Right ventricle myocardium superior (tissue), 1 donor: ENCODE measurements at regions of chr6 and their contacts with region 1.

Region 1: GRCh38 chr6:24581084-24581669 is 64.8 kb downstream of the KIAA0319 start:
- DNase-seq: peak; percentile 81
- ATAC-seq: peak; percentile 74

Region 2: DNA sequence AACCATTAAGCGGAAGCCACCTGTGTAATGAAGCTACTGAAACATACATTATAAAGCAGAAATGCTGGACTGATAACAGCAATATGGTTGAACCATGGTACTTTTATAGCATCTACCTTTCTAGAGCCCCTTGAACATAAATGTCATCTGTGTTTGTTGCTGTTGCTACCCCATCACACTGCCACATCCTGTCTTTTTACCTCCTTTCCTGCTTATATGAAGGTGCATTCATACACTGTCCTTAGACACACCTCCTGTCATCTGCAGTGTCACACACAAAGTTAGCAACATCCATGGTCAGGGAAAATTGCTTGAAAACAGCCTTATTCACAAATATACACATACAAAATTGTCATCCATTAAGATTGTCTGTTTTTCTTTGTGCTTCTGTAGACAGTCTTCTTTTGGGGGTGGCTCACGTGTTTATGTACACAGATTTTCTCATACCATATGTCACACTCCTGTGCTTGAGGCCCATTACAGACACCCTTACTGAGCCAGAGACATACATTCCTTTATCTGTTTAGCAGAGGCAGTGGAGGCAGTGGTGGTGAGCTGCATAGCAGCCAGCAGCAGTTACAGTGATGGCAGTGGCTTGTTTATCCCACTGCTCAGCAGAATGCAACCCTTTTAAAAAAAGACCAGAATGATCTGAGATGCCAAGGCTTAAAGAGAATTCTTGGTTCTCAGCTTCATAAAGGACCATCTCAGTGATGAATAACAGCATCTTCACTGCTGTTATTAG is 111.8 kb after region 1 on chr6:
- intact Hi-C with region 1: loop called (anchors 2 kb)
- DNase-seq: no peak
- ATAC-seq: no peak

Region 3: GRCh38 chr6:24766680-24767462 is 185.7 kb after region 1 on chr6:
- intact Hi-C with region 1: loop called (anchors 5 kb)
- DNase-seq: no peak
- ATAC-seq: peak; percentile 72

Region 4: GRCh38 chr6:24818346-24818745 is 237.2 kb after region 1 on chr6:
- intact Hi-C with region 1: no loop called
- DNase-seq: no peak
- ATAC-seq: no peak